ENCODE measurements at regions of chr4 and their contacts with region 1.

Region 1: GRCh38 chr4:183950536-183950935 is 45.4 kb downstream of the STOX2 start:
- DNase-seq: no peak
- ATAC-seq: no peak
- H3K4me3 ChIP-seq: no peak overlapping the region
- H3K4me3 Mint-ChIP-seq: no peak overlapping the region
- H3K27ac ChIP-seq: no peak overlapping the region
- H3K27ac Mint-ChIP-seq: no peak overlapping the region
- H3K4me1 ChIP-seq: no peaks in the 10 kb centered on the region
- H3K4me1 Mint-ChIP-seq: no peaks in the 10 kb centered on the region
- H3K27me3 ChIP-seq: peaks cover 0 to 3% of the 10 kb centered on the region in 2 experiments
- H3K27me3 Mint-ChIP-seq: peaks cover 10 to 13% of the 10 kb centered on the region in 2 donors

Region 2: DNA sequence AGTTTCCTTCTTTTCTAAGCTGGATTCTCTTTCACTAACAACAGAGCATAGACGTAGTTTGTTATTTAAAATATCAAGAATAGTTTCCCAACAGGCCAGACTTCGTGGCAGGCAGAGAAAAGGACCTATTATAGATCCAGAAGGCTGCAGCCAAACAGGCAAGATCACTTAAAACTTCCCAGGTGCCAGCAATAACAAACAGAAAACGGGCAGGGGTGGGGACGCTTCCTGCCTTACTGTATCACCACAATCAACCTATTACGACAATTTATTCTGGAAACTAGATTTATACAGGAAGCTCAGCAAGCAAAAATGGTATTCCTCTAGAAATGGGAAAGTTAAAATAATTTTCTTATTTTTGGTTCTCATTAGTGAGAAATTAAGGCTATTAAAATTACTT is 313.6 kb before region 1 on chr4:
- CTCF ChIA-PET with region 1: no interaction called
- POLR2A ChIA-PET with region 1: no interaction called
- DNase-seq: no peak
- ATAC-seq: no peak
- H3K4me3 ChIP-seq: no peak overlapping the region
- H3K4me3 Mint-ChIP-seq: no peak overlapping the region
- H3K27ac ChIP-seq: no peak overlapping the region
- H3K27ac Mint-ChIP-seq: peak overlapping the region in 1 of 2 donors; percentile 40
- H3K4me1 ChIP-seq: peaks cover 0 to 2% of the 10 kb centered on the region in 2 experiments
- H3K4me1 Mint-ChIP-seq: peaks cover 0 to 11% (median 5%) of the 10 kb centered on the region in 3 donors
- H3K27me3 ChIP-seq: no peaks in the 10 kb centered on the region
- H3K27me3 Mint-ChIP-seq: no peaks in the 10 kb centered on the region

Region 3: DNA sequence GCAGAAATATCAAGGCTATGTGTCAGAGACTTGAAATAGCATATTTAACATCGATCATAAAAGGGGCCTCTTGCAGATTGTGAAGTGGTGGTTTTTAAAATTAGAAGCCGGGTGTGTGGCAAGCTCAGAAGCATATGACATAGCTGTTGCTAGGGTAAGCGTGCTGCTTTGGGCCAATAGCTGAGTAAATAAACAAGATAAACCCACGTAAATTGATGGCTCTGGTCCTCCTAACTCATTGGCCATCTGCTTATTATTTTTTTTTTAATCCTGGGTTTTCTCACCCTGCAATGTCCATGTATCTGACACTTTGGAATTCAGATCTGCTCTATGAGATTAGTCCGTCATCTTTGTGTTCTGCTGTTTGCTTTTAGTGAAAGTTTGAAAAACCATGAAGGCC is 78.0 kb before region 1 on chr4:
- CTCF ChIA-PET with region 1: no interaction called
- POLR2A ChIA-PET with region 1: no interaction called
- DNase-seq: no peak
- ATAC-seq: no peak
- H3K4me3 ChIP-seq: no peak overlapping the region
- H3K4me3 Mint-ChIP-seq: no peak overlapping the region
- H3K27ac ChIP-seq: no peak overlapping the region
- H3K27ac Mint-ChIP-seq: no peak overlapping the region
- H3K4me1 ChIP-seq: no peaks in the 10 kb centered on the region
- H3K4me1 Mint-ChIP-seq: peaks cover 0 to 2% (median 0%) of the 10 kb centered on the region in 3 donors
- H3K27me3 ChIP-seq: peaks cover 0 to 10% of the 10 kb centered on the region in 2 experiments
- H3K27me3 Mint-ChIP-seq: peaks cover 0 to 6% of the 10 kb centered on the region in 2 donors

Region 4: GRCh38 chr4:183936574-183937345 is 13.8 kb before region 1 on chr4:
- CTCF ChIA-PET with region 1: no interaction called
- POLR2A ChIA-PET with region 1: no interaction called
- DNase-seq: no peak
- ATAC-seq: no peak
- H3K4me3 ChIP-seq: no peak overlapping the region
- H3K4me3 Mint-ChIP-seq: no peak overlapping the region
- H3K27ac ChIP-seq: no peak overlapping the region
- H3K27ac Mint-ChIP-seq: no peak overlapping the region
- H3K4me1 ChIP-seq: no peaks in the 10 kb centered on the region
- H3K4me1 Mint-ChIP-seq: no peaks in the 10 kb centered on the region
- H3K27me3 ChIP-seq: peaks cover 0 to 3% of the 10 kb centered on the region in 2 experiments
- H3K27me3 Mint-ChIP-seq: peaks cover 7 to 9% of the 10 kb centered on the region in 2 donors

Region 5: DNA sequence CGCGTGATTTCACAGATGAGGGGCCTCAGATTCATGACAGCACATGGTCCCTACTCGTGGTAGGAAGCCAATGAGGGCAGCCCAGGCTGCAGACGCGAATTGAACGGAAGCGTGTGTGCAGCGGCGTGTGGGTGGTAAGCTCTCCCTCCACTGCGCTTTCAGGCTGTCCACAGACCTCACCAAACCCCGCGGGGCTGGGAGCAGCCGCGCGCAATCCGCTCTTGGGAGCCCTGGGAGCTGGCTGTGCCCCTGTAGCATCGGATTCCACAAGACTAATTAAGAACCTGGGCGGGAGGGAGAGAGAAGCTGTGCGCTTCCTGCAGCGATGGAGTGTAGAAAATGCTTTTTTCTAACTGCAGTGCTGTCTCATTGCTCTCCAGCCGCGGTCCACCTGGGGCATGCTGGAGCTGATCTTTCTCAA is 89.4 kb after region 1 on chr4:
- CTCF ChIA-PET with region 1: no interaction called
- POLR2A ChIA-PET with region 1: no interaction called
- DNase-seq: peak in 2 of 35 experiments; percentile 2 to 3
- ATAC-seq: peak in 1 of 4 experiments; percentile 56
- H3K4me3 ChIP-seq: peak overlapping the region; percentile 7 to 68
- H3K4me3 Mint-ChIP-seq: peak overlapping the region in 2 of 3 donors; percentile 14 to 66
- H3K27ac ChIP-seq: no peak overlapping the region
- H3K27ac Mint-ChIP-seq: no peak overlapping the region
- H3K4me1 ChIP-seq: peaks cover 0 to 4% of the 10 kb centered on the region in 2 experiments
- H3K4me1 Mint-ChIP-seq: peaks cover 5 to 11% (median 10%) of the 10 kb centered on the region in 3 donors
- H3K27me3 ChIP-seq: peaks cover 0 to 12% of the 10 kb centered on the region in 2 experiments
- H3K27me3 Mint-ChIP-seq: peaks cover 40 to 41% of the 10 kb centered on the region in 2 donors

Region 6: GRCh38 chr4:184074989-184075388 is 124.5 kb after region 1 on chr4:
- CTCF ChIA-PET with region 1: no interaction called
- POLR2A ChIA-PET with region 1: interaction called in 1 of 2 experiments, 10 read pairs
- DNase-seq: no peak
- ATAC-seq: no peak
- H3K4me3 ChIP-seq: no peak overlapping the region
- H3K4me3 Mint-ChIP-seq: no peak overlapping the region
- H3K27ac ChIP-seq: no peak overlapping the region
- H3K27ac Mint-ChIP-seq: no peak overlapping the region
- H3K4me1 ChIP-seq: no peaks in the 10 kb centered on the region
- H3K4me1 Mint-ChIP-seq: no peaks in the 10 kb centered on the region
- H3K27me3 ChIP-seq: peaks cover 0 to 3% of the 10 kb centered on the region in 2 experiments
- H3K27me3 Mint-ChIP-seq: peaks cover 23 to 34% of the 10 kb centered on the region in 2 donors

Measured in T-cell (primary cell).